MCF 10A (cell line): ENCODE measurements at regions of chr20 and their contacts with region 1.

Region 1: GRCh38 chr20:63223221-63224207 is 7.6 kb upstream of the YTHDF1 start:
- DNase-seq: peak; percentile 57
- H3K4me3 Mint-ChIP-seq: no peak overlapping the region
- H3K27ac Mint-ChIP-seq: no peak overlapping the region
- H3K4me1 Mint-ChIP-seq: peaks cover 9% of the 10 kb centered on the region
- H3K27me3 Mint-ChIP-seq: peaks cover 17% of the 10 kb centered on the region
- CTCF ChIP-seq: peak; percentile 83

Region 2: GRCh38 chr20:63191400-63191799 is 32.1 kb before region 1 on chr20:
- CTCF ChIA-PET with region 1: interaction called, 16 read pairs
- POLR2A ChIA-PET with region 1: interaction called, 3 read pairs
- intact Hi-C with region 1: no loop called
- DNase-seq: peak; percentile 92
- H3K4me3 Mint-ChIP-seq: no peak overlapping the region
- H3K27ac Mint-ChIP-seq: peak overlapping the region; percentile 54
- H3K4me1 Mint-ChIP-seq: peaks cover 16% of the 10 kb centered on the region
- H3K27me3 Mint-ChIP-seq: no peaks in the 10 kb centered on the region
- CTCF ChIP-seq: no peak

Region 3: DNA sequence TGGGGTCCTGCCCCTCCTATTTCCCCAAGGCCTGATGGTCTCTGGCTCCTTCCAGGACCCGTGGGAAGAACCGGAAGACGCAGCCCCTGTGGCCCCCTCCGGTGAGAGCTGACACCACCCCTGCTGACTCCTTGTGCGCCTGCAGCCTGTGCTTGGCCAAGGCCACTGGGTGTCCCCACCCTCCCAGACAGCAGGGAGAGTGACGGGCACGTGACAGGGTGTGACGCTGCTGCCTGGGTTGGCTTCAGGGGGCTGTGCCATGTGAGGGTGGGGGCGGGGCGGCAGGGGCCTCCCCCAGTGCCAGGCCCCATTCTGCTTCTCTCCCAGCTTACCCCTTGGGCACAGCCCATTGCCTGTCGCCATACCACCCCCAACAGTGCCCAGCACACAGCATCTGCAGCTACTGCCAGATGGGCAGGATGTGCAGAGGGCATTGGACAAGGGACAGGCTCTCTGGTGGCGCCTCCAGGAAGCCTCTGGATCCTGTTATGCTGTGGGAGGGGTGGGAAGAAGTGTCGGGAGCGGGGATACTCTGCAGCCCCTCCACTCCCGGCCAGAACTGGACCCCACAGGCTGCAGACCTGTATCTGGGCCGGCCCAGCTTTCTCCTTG is 15.1 kb after region 1 on chr20:
- CTCF ChIA-PET with region 1: interaction called, 115 read pairs
- POLR2A ChIA-PET with region 1: interaction called, 7 read pairs
- intact Hi-C with region 1: no loop called
- DNase-seq: no peak
- H3K4me3 Mint-ChIP-seq: no peak overlapping the region
- H3K27ac Mint-ChIP-seq: no peak overlapping the region
- H3K4me1 Mint-ChIP-seq: no peaks in the 10 kb centered on the region
- H3K27me3 Mint-ChIP-seq: peaks cover under 1% of the 10 kb centered on the region
- CTCF ChIP-seq: no peak

Region 4: GRCh38 chr20:63258781-63259180 is 35.3 kb after region 1 on chr20:
- CTCF ChIA-PET with region 1: interaction called, 45 read pairs
- POLR2A ChIA-PET with region 1: interaction called, 5 read pairs
- intact Hi-C with region 1: no loop called
- DNase-seq: no peak
- H3K4me3 Mint-ChIP-seq: no peak overlapping the region
- H3K27ac Mint-ChIP-seq: no peak overlapping the region
- H3K4me1 Mint-ChIP-seq: peaks cover 21% of the 10 kb centered on the region
- H3K27me3 Mint-ChIP-seq: peaks cover 59% of the 10 kb centered on the region
- CTCF ChIP-seq: no peak

Region 5: GRCh38 chr20:63280929-63281545 is 57.5 kb after region 1 on chr20:
- CTCF ChIA-PET with region 1: interaction called, 36 read pairs
- POLR2A ChIA-PET with region 1: no interaction called
- intact Hi-C with region 1: no loop called
- DNase-seq: no peak
- H3K4me3 Mint-ChIP-seq: no peak overlapping the region
- H3K27ac Mint-ChIP-seq: no peak overlapping the region
- H3K4me1 Mint-ChIP-seq: no peaks in the 10 kb centered on the region
- H3K27me3 Mint-ChIP-seq: no peaks in the 10 kb centered on the region
- CTCF ChIP-seq: peak; percentile 27

Region 6: GRCh38 chr20:63361519-63362425 is 138.3 kb after region 1 on chr20:
- CTCF ChIA-PET with region 1: interaction called, 10 read pairs
- POLR2A ChIA-PET with region 1: no interaction called
- intact Hi-C with region 1: no loop called
- DNase-seq: no peak
- H3K4me3 Mint-ChIP-seq: no peak overlapping the region
- H3K27ac Mint-ChIP-seq: no peak overlapping the region
- H3K4me1 Mint-ChIP-seq: no peaks in the 10 kb centered on the region
- H3K27me3 Mint-ChIP-seq: peaks cover 12% of the 10 kb centered on the region
- CTCF ChIP-seq: no peak